Activated CD8-positive, alpha-beta memory T cell treated with anti-CD3 and anti-CD28 coated beads, Interleukin-2, amount 10 ng/mL, durations not matched to agents 7 days and 5 days (primary cell): ENCODE measurements at regions of chr1 and their contacts with region 1.

Region 1: DNA sequence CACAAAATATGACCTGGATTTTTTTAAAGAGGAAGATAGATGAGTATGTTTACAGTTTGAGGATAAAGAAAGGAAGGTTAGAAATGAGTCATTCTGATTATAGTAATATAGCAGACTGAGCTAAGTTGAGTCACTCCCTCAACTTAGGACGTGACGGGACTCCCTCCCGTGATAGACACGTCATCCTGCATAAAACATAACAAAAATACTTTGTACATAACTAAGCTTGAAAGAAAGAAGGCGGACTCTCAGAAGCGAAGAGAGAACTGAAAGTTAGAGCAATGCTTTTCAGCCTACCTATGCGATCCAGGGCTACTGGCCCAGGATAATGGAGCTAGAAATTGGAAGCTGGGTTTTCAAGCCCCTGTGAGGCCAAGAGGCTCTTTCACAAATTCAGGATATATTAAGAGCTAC is 53.0 kb upstream of the DESI2 start:
- DNase-seq: peak; percentile 77
- ATAC-seq: peak; percentile 98
- H3K4me3 Mint-ChIP-seq: peak overlapping the region; percentile 67
- H3K27ac Mint-ChIP-seq: peak overlapping the region; percentile 89
- H3K4me1 Mint-ChIP-seq: peaks cover 14% of the 10 kb centered on the region
- H3K27me3 Mint-ChIP-seq: peaks cover 9% of the 10 kb centered on the region

Region 2: DNA sequence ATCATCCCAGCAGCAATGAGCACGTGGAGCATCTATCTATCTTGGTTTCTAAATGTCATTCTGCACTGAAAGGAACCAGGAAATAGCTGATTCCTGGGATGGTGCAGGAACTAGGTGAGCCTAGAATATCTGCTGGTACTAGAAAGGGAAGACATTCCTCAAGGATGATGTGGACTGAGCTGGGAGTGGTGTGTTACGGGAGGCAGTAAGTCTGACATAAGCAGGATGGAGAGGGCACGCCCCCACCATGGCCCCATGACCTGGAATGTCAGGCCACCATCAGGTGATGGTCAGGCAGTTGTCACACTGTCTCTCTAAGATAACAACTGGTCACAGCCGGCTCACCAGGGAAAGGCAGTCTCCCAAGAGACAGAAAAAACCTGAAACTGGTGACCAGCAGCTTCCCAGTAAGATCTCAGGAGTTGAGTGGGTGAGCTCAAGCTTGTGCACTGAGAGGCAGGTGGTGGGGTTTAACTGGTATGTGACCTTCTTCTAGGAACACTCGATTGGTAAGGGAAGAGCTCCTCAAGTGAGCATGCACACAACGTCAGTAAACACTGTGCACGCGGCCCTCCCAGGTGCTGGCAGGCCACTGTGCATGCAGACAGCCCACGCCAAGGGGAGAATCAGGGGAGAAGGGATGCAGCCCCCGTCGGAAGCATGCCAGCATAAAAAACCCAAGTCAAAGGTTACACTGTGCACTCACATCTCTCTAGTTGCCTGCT is 296.9 kb before region 1 on chr1:
- CTCF ChIA-PET with region 1: no interaction called
- DNase-seq: no peak
- ATAC-seq: no peak
- H3K4me3 Mint-ChIP-seq: no peak overlapping the region
- H3K27ac Mint-ChIP-seq: no peak overlapping the region
- H3K4me1 Mint-ChIP-seq: peaks cover 13% of the 10 kb centered on the region
- H3K27me3 Mint-ChIP-seq: peaks cover 3% of the 10 kb centered on the region

Region 3: DNA sequence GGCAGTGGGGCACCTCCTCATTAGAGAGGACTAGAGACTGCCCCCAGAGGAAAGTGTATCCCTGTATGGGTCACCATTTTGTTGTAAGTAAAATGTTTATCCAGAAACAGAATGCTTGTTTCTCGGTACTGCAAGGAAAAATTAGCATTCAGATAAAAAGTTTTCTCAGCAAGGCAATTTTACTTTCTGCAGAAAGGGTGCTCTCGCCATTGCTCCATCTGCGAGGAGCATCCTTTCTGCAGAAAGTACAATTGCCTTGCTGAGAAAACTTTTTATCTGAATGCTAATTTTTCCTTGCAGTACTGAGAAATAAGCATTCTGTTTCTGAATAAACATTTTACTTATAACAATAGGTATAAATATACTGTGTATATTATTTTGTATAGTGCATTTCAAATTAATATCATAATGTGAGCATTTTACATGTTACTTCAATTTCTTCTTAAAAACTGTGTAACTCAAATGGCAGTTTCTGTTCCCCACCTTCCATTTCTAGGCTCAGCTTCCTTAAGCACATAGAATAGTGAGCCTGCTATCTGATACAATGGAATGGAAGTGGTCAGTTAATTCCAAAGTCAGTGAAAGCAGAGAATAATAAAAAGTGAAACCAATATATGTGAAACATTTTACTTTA is 23.6 kb before region 1 on chr1:
- CTCF ChIA-PET with region 1: no interaction called
- DNase-seq: no peak
- ATAC-seq: no peak
- H3K4me3 Mint-ChIP-seq: no peak overlapping the region
- H3K27ac Mint-ChIP-seq: no peak overlapping the region
- H3K4me1 Mint-ChIP-seq: no peaks in the 10 kb centered on the region
- H3K27me3 Mint-ChIP-seq: no peaks in the 10 kb centered on the region

Region 4: DNA sequence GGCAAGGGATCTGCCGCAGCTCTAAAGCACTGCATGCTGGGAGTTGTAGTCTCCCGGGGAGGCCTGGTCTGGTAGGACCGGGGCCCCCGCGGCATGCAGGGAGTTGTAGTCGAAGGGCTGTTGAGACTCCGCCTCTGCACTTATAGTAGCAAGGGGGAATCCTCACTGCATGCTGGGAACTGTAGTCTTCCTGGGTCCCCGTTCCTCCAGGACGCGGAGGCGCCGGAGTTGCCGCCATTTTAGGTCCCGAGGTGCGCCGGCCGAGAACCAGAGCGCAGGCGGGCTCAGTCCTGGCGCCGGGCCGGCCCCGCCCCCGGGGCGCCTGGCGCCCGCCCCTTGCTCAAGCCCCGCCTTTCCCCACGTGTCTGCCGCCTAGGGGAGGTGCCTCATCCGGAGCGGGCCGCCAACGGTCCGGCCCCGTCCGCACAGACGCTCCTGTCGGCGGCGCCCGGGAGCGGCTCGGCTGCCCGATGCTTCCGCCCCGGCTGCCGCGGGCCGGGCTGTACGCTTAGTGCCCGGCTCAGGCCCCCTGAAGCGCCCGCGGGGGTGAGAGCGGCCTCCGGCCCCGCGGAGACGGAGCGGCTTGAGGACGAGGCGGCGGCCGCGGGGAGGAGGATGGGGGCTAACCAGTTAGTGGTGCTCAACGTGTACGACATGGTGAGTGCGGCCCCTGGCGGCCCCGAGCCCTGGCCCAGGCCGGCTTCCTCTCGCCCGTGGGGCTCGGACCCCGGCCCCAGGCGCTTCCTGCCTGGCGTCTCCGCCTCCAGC is 52.9 kb after region 1 on chr1 and contains the start of gene DESI2:
- CTCF ChIA-PET with region 1: interaction called, 17 read pairs
- DNase-seq: peak; percentile 99
- ATAC-seq: peak; percentile 94
- H3K4me3 Mint-ChIP-seq: peak within 1 kb of the TSS; percentile 81
- H3K27ac Mint-ChIP-seq: peak within 1 kb of the TSS; percentile 82
- H3K4me1 Mint-ChIP-seq: peaks cover 15% of the 10 kb centered on the region
- H3K27me3 Mint-ChIP-seq: no peaks in the 10 kb centered on the region
- total RNA-seq, gene DESI2: 24.5 to 26.4 TPM

Region 5: DNA sequence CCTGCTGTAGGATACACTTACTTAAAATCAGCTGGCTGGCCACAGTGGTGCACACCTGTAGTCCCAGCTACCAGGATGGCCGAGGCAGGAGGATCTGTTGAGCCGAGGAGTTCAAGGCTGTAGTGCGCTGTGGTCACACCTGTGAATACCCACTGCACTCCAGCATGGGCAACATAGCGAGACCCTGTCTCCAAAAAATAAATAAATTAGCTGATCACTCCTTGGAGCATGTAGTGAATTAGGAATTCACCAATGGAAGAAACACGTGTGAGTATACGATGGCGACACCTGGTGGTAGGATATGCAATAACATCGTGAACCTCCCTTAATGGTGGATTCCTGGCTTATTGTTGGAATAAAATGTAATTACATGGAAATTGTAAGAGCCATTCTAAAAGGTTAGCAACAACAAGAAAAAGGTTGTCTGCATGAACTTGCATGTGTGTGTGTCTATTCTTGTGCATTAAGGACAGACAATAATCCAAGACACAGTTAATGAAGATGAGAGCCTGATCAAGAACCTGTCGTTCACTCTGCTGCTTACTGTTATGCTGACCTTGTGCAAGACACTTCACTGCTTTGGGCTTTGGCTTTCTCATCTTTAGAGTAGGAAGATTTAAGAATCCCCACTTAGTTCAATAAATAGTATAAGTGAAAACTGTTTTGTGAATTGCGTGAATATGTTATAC is 196.9 kb after region 1 on chr1:
- CTCF ChIA-PET with region 1: interaction called, 87 read pairs
- DNase-seq: peak; percentile 57
- ATAC-seq: no peak
- H3K4me3 Mint-ChIP-seq: no peak overlapping the region
- H3K27ac Mint-ChIP-seq: no peak overlapping the region
- H3K4me1 Mint-ChIP-seq: peaks cover 5% of the 10 kb centered on the region
- H3K27me3 Mint-ChIP-seq: peaks cover 13% of the 10 kb centered on the region